ENCODE measurements at regions of chr9 and their contacts with region 1.

Region 1: GRCh38 chr9:80968611-80969010 is 720.7 kb downstream of the TLE1 start:
- DNase-seq: no peak
- H3K4me3 ChIP-seq: no peak overlapping the region
- H3K27ac ChIP-seq: no peak overlapping the region
- H3K4me1 ChIP-seq: no peaks in the 10 kb centered on the region
- H3K27me3 ChIP-seq: no peaks in the 10 kb centered on the region
- CTCF ChIP-seq: no peak
- POLR2A ChIP-seq: no peak

Region 2: DNA sequence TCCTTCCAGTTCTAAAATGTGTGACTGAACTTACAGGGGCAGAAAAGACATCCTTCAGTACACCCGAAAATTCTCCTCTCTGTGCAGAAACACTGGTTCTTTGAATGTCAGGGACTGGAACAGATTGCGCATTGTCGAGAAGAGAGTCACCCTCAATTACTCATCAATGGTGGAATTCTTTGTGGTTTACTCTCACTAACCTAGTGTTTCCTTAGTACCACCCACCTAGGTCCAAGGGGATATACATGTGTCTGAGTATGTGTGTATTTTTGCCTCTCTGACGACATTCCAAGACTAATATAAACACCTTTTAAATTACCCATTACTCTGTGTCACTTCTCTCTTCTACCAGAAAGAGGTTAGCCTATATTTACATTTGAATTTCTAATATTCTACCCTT is 59.9 kb after region 1 on chr9:
- intact Hi-C with region 1: loop called (anchors 10 kb)
- DNase-seq: no peak
- H3K4me3 ChIP-seq: no peak overlapping the region
- H3K27ac ChIP-seq: no peak overlapping the region
- H3K4me1 ChIP-seq: no peaks in the 10 kb centered on the region
- H3K27me3 ChIP-seq: no peaks in the 10 kb centered on the region
- CTCF ChIP-seq: no peak
- POLR2A ChIP-seq: no peak

Measured in uterus (tissue), 4 donors.